ENCODE measurements at regions of chr9 and their contacts with region 1.

Region 1: DNA sequence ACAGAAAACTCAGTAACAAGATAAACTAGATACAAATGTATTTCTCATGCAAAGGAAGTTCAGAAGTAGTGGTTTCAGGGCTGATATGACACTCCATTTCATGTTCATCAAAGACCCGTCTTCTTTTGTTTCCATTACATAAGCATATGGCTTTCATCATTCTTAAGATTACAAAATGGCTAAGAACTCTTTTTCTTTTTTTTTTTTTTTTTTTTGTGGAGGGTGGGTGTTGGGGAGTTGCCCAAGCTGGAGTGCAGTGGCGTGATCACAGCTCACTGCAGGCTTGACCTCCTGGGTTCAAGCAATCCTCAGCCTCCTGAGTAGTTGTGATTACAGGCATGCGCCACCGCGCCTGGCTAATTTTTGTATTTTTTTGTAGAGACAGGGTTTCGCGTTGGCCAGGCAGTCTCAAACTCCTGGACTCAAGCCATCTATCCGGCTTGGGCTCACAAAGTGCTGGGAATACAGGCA is 22.0 kb upstream of the PTBP3 start:
- DNase-seq: peak; percentile 55
- ATAC-seq: peak; percentile 68
- H3K4me3 ChIP-seq: no peak overlapping the region
- H3K27ac ChIP-seq: peak overlapping the region; percentile 3
- H3K4me1 ChIP-seq: no peaks in the 10 kb centered on the region
- H3K27me3 ChIP-seq: no peaks in the 10 kb centered on the region
- CTCF ChIP-seq: no peak

Region 2: GRCh38 chr9:112097712-112098688 is 257.5 kb before region 1 on chr9:
- intact Hi-C with region 1: loop called (anchors 10 kb)
- DNase-seq: peak; percentile 49
- ATAC-seq: peak; percentile 87 to 91
- H3K4me3 ChIP-seq: no peak overlapping the region
- H3K27ac ChIP-seq: no peak overlapping the region
- H3K4me1 ChIP-seq: no peaks in the 10 kb centered on the region
- H3K27me3 ChIP-seq: no peaks in the 10 kb centered on the region
- CTCF ChIP-seq: peak; percentile 90

Region 3: DNA sequence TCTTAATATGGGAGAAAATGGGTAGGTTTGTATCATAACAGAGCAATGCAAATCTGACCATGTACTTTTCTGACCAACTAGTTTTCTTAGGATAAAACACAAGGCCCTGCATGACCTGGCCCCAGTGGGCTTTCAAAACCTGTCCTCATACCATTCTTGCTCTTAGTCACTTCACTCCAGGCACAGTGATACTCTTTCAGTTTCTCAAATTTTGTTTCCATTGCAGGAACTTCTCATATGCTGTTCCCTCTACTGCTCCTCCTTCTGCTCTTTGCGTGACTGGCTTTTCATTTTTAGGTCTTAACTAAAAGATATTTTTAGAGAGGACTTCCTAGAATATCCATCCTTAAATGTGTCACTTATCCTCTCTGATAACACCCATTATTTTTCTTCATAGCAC is 250.1 kb after region 1 on chr9:
- intact Hi-C with region 1: no loop called
- DNase-seq: no peak
- ATAC-seq: no peak
- H3K4me3 ChIP-seq: no peak overlapping the region
- H3K27ac ChIP-seq: no peak overlapping the region
- H3K4me1 ChIP-seq: no peaks in the 10 kb centered on the region
- H3K27me3 ChIP-seq: no peaks in the 10 kb centered on the region
- CTCF ChIP-seq: no peak

Measured in lower lobe of right lung (tissue), 2 donors.